ENCODE measurements at regions of chr3 and their contacts with region 1.

Region 1: DNA sequence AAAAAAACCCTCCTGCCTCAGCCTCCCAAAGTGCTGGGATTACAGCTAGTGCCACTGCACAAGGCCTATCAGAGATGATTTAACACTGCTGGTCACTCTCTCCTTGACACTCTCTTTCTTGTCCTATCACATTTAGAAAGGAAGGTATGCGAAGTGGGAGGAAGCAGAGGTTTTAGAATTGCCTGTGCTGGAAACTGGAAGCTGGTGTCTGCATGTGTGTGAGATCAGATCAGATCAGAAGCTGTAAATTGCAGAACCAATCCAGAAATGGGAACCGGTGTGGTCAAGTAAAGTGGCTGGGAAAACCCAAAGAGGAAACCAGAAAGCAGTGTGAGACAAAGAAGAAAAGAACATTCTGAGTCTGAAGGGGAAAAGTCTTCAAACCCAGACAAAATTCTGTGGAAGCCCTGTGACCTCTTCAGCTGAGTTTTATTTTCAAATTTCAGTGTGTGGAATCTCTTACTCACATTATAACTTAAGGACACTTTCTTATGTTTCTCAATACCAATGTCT is 2.8 kb downstream of the EFHB start:
- DNase-seq: peak; percentile 84
- H3K4me3 Mint-ChIP-seq: peak overlapping the region; percentile 3
- H3K27ac Mint-ChIP-seq: peak overlapping the region; percentile 76
- H3K4me1 Mint-ChIP-seq: peaks cover 33% of the 10 kb centered on the region
- H3K27me3 Mint-ChIP-seq: peaks cover 12% of the 10 kb centered on the region

Region 2: DNA sequence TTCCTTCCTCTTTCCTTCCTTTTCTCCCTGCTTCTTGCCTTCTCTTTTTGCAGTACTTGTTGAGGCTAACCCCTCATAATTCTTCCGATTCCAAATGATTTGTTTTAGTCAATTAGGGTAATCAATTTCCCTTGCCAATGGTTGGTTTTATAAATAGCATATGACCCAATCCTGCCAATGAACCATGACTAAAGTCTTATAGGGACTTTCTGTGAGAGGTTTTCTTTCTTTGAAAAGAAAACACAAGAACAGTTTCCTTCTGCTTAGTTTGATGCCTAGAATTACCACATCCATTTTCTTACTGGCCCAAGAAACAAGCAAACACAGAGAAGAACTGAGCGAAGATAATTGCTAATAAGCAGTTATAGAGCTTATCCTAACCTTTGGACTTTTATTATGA is 1213.6 kb before region 1 on chr3:
- CTCF ChIA-PET with region 1: no interaction called
- POLR2A ChIA-PET with region 1: no interaction called
- intact Hi-C with region 1: loop called (anchors 10 kb)
- DNase-seq: no peak
- H3K4me3 Mint-ChIP-seq: no peak overlapping the region
- H3K27ac Mint-ChIP-seq: peak overlapping the region; percentile 91
- H3K4me1 Mint-ChIP-seq: peaks cover 73% of the 10 kb centered on the region
- H3K27me3 Mint-ChIP-seq: no peaks in the 10 kb centered on the region

Region 3: DNA sequence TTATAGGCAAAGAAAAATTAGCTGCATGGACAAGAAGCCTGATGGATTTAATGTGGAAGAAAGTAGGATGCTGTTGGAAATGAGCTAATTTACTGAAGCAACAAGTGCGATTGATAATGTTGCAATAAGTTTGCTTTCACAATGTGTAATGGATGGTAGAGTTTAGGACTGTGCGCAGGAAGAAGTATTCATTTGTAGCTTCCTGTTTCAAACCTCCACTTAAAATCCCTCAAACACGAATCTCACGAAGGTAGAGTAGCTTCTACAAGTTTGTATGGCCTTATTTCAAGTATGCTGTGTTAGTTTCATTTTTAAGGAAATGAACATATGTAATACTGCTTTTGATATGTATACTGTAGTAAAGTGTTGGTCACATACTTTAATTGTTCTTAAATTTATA is 740.6 kb before region 1 on chr3:
- CTCF ChIA-PET with region 1: no interaction called
- POLR2A ChIA-PET with region 1: no interaction called
- intact Hi-C with region 1: loop called (anchors 2 kb)
- DNase-seq: no peak
- H3K4me3 Mint-ChIP-seq: no peak overlapping the region
- H3K27ac Mint-ChIP-seq: no peak overlapping the region
- H3K4me1 Mint-ChIP-seq: peaks cover 3% of the 10 kb centered on the region
- H3K27me3 Mint-ChIP-seq: no peaks in the 10 kb centered on the region

Region 4: GRCh38 chr3:19907523-19907922 is 23.7 kb before region 1 on chr3:
- CTCF ChIA-PET with region 1: no interaction called
- POLR2A ChIA-PET with region 1: no interaction called
- intact Hi-C with region 1: no loop called
- DNase-seq: no peak
- H3K4me3 Mint-ChIP-seq: no peak overlapping the region
- H3K27ac Mint-ChIP-seq: no peak overlapping the region
- H3K4me1 Mint-ChIP-seq: no peaks in the 10 kb centered on the region
- H3K27me3 Mint-ChIP-seq: peaks cover 2% of the 10 kb centered on the region

Region 5: DNA sequence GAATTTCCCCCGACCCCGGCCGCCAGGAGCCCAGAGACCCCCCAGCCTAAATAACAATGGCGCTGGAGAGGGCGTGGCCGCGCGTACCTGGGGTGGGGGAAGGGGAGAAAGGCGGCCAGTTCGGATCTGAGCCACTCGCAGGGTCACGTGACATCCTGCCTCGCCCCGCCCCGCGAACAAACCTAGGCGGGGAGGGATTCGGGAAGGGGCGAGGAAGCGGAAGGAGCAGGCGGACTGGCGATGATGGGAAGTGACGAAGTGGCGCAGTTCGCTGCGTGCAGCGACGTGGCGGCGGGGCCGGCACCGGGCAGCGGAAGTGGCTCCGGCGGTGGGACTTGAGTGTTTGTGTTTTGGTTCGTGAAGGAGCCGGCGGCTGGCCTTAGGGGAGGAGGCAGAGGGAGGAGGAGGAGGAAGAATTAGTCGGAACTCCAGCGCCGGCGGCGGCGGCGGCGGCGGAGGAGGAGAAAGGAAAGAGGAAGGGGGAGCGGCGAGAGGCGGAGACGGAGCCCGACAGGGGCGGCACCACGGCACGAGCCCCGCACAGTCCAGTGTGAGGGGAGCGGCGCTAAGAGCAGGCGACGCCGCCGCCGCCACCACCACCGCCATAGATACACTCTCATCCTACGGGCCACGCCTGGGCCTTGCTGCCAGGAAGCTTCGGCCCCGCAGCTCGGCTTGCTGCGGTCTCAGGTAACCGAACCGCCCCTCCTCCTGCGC is 15.8 kb after region 1 on chr3 and contains the start of gene RAB5A:
- CTCF ChIA-PET with region 1: no interaction called
- POLR2A ChIA-PET with region 1: interaction called, 9 read pairs
- intact Hi-C with region 1: loop called (anchors 1 kb)
- DNase-seq: peak; percentile 98
- H3K4me3 Mint-ChIP-seq: peak within 1 kb of the TSS; percentile 93
- H3K27ac Mint-ChIP-seq: peak within 1 kb of the TSS; percentile 99
- H3K4me1 Mint-ChIP-seq: peaks cover 44% of the 10 kb centered on the region
- H3K27me3 Mint-ChIP-seq: no peaks in the 10 kb centered on the region
- total RNA-seq, gene RAB5A: 55.6 to 65.3 TPM

Region 6: GRCh38 chr3:20060974-20061685 is 129.9 kb after region 1 on chr3:
- CTCF ChIA-PET with region 1: no interaction called
- POLR2A ChIA-PET with region 1: interaction called, 7 read pairs
- intact Hi-C with region 1: loop called (anchors 1 kb)
- DNase-seq: peak; percentile 56
- H3K4me3 Mint-ChIP-seq: no peak overlapping the region
- H3K27ac Mint-ChIP-seq: peak overlapping the region; percentile 72
- H3K4me1 Mint-ChIP-seq: peaks cover 54% of the 10 kb centered on the region
- H3K27me3 Mint-ChIP-seq: no peaks in the 10 kb centered on the region

Region 7: DNA sequence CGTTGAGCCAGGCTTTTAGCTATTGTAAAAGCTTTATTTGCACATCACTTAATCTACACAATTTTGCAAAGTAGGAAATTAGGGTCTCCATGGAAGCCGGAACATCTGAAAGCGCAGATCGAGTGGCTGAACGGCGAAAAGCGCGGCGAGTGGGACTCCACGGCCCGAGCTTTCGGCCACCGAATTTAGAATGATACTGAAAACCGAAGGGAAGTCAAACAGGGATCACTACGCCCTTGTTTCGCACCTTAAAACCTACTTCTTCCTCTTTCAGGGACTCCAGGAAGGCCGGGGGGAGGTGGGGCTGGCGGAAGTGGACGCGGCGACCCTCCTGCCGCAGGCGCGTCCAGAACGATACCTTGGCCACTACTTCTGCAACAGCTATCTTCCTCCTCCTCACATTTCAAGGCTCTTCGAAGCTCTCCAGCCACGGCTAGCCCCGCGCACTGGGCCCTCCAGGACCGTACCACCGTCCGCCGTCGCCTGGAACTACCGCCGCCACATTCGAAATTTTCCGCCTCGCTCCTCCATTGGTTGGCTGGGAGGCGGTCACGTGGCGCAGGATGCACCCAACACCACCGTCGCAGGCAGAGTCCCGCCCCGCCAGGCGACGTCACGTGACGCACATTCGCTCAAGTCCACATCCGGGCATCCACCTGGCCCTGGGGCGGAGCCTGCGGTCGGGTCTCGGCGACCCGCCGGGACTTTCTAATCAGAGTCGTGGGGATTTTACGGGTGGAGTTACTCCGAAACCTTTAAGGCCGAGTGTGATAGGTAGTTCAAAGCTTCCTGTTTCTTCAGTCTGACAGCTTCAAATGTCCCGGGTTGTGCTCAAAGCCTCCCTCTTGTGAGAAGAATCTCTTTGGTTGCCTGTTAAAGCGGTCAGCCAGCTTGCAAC is 254.7 kb after region 1 on chr3 and contains the start of gene SGO1:
- CTCF ChIA-PET with region 1: no interaction called
- POLR2A ChIA-PET with region 1: interaction called, 3 read pairs
- intact Hi-C with region 1: loop called (anchors 1 kb)
- DNase-seq: peak; percentile 100
- H3K4me3 Mint-ChIP-seq: no peak within 1 kb of the TSS
- H3K27ac Mint-ChIP-seq: no peak within 1 kb of the TSS
- H3K4me1 Mint-ChIP-seq: no peaks in the 10 kb centered on the region
- H3K27me3 Mint-ChIP-seq: no peaks in the 10 kb centered on the region
- total RNA-seq, gene SGO1: 37.4 to 37.8 TPM

Measured in activated CD4-positive, alpha-beta memory T cell treated with anti-CD3 and anti-CD28 coated beads for 36 hours (primary cell).